Activated B cell treated with CpG ODN at 0.5 μM for 24 hours (primary cell): ENCODE measurements at regions of chr1 and their contacts with region 1.

Region 1: DNA sequence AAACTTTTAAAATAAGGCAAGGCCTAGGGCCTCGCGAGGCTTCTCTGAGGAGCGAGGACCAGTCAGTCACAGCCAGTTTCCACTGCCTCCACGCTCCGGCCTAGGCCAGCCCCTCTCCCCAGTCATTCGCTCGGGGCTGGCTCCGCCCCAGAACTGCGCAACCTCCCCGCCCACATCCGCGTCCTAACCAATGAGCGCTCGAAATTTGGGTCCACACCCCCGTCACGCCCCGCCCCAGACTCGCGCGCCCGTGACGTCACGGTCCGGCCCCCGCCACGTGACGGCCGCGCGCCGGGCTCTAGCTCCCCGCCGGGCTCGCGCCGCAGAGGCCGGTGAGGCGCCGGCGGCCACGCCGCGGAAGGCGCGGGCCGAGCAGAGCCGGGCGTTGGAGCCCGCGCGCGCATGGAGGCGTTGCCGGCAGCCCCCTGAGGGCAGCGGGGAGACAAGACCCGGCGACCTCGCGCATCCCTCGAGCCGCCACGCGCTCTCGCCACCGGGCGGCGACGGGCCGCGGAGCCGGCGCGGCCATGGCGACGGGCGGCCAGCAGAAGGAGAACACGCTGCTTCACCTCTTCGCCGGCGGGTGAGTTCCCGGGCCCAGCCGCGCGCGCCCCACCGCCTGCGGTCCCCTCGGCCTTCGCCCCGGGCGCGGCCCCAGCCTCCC is at the start of gene SLC25A33:
- DNase-seq: peak; percentile 99
- ATAC-seq: peak; percentile 96
- H3K4me3 Mint-ChIP-seq: peak within 1 kb of the TSS; percentile 92
- H3K27ac Mint-ChIP-seq: peak within 1 kb of the TSS; percentile 90
- H3K4me1 Mint-ChIP-seq: peaks cover 29% of the 10 kb centered on the region
- H3K27me3 Mint-ChIP-seq: no peaks in the 10 kb centered on the region
- CTCF ChIP-seq: no peak
- total RNA-seq, gene SLC25A33: 6.5 and 7.5 TPM in 2 replicates

Region 2: DNA sequence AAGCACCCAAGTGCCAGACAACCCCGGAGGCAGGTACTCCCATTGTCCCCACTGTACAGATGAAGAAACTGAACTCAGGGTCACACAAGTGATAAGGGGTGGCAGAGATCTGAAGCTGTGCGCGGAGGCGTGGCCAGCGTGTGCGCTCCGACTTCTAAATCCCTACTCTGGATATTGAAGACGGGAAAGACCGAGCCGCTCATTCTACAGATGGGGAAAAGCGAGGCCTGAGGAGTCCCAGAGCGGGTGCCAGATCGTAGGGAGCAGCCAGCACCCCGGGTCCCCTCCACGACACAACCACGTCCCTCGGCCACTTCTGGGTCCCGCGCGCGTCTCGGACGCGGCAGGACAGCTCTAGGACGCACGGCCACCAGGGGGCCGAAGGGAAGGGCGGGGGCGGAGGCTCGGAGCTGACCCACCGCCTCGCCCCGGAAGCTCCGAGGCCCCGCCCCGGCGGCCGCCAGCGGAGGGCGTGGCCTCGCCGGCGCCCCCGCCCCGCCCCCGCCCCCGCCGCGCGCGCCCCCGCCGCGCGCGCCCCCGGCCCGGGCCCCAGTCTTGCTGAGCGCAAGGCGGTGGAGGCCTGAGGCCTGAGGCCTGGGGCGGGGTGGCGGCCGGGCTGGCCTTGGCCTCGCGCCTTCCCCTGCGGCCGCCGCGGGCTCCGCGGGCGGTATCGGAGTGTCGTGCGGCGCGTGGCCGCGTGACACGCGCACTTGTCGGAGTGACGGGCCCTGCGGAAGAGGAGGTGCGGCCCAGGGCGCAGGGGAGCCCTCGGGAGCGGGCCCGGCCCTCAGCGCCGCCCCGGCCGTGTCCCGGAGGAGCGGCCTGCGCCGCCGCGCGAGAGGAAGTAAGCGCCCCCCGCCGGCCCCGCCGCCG is 304.8 kb before region 1 on chr1 and contains the start of gene H6PD:
- CTCF ChIA-PET with region 1: no interaction called
- POLR2A ChIA-PET with region 1: no interaction called
- intact Hi-C with region 1: loop called (anchors 1 kb)
- DNase-seq: peak; percentile 82
- ATAC-seq: peak; percentile 82
- H3K4me3 Mint-ChIP-seq: peak within 1 kb of the TSS; percentile 92
- H3K27ac Mint-ChIP-seq: peak within 1 kb of the TSS; percentile 94
- H3K4me1 Mint-ChIP-seq: peaks cover 34% of the 10 kb centered on the region
- H3K27me3 Mint-ChIP-seq: no peaks in the 10 kb centered on the region
- CTCF ChIP-seq: no peak
- total RNA-seq, gene H6PD: 20.3 and 21.9 TPM in 2 replicates

Region 3: GRCh38 chr1:9520411-9520810 is 18.9 kb before region 1 on chr1:
- CTCF ChIA-PET with region 1: no interaction called
- POLR2A ChIA-PET with region 1: interaction called, 13 read pairs
- intact Hi-C with region 1: no loop called
- DNase-seq: no peak
- ATAC-seq: no peak
- H3K4me3 Mint-ChIP-seq: no peak overlapping the region
- H3K27ac Mint-ChIP-seq: no peak overlapping the region
- H3K4me1 Mint-ChIP-seq: no peaks in the 10 kb centered on the region
- H3K27me3 Mint-ChIP-seq: peaks cover 2% of the 10 kb centered on the region
- CTCF ChIP-seq: no peak

Region 4: DNA sequence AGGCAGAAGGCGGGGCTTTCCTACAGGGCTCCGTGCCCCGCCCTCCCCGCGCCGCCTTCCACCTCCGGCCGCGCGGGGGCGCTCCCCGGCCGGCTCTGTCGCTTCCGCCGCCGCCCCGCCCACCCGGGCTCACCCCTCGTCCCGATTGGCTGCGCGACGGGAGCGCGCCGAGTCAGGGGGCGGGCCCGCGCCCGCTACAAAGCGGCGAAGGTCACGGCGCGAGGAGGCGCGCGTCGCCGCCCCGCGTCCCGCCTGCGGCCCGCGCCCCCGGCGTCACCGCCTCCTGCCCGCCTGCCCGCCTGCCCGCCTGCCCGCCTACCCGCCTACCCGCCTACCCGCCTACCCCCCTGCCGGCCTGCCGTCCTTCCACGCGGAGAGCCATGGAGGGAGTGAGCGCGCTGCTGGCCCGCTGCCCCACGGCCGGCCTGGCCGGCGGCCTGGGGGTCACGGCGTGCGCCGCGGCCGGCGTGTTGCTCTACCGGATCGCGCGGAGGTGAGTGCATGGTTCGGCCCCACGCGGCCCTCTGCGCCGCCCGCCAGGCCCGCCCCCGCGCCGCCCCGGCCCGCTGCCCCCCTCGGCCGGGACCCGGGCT is 49.4 kb after region 1 on chr1 and contains the start of gene TMEM201:
- CTCF ChIA-PET with region 1: no interaction called
- POLR2A ChIA-PET with region 1: interaction called, 3 read pairs
- intact Hi-C with region 1: loop called (anchors 5 kb)
- DNase-seq: peak; percentile 98
- ATAC-seq: peak; percentile 91
- H3K4me3 Mint-ChIP-seq: peak within 1 kb of the TSS; percentile 84
- H3K27ac Mint-ChIP-seq: peak within 1 kb of the TSS; percentile 12
- H3K4me1 Mint-ChIP-seq: peaks cover 38% of the 10 kb centered on the region
- H3K27me3 Mint-ChIP-seq: no peaks in the 10 kb centered on the region
- CTCF ChIP-seq: no peak
- total RNA-seq, gene TMEM201: 8.1 and 9.4 TPM in 2 replicates

Region 5: GRCh38 chr1:9753121-9753531 is 213.8 kb after region 1 on chr1:
- CTCF ChIA-PET with region 1: no interaction called
- POLR2A ChIA-PET with region 1: no interaction called
- intact Hi-C with region 1: no loop called
- DNase-seq: no peak
- ATAC-seq: no peak
- H3K4me3 Mint-ChIP-seq: no peak overlapping the region
- H3K27ac Mint-ChIP-seq: no peak overlapping the region
- H3K4me1 Mint-ChIP-seq: no peaks in the 10 kb centered on the region
- H3K27me3 Mint-ChIP-seq: no peaks in the 10 kb centered on the region
- CTCF ChIP-seq: no peak

Region 6: GRCh38 chr1:9910425-9911178 is 371.3 kb after region 1 on chr1:
- CTCF ChIA-PET with region 1: no interaction called
- POLR2A ChIA-PET with region 1: no interaction called
- intact Hi-C with region 1: loop called (anchors 2 kb)
- DNase-seq: no peak
- ATAC-seq: peak; percentile 90
- H3K4me3 Mint-ChIP-seq: peak overlapping the region; percentile 97
- H3K27ac Mint-ChIP-seq: peak overlapping the region; percentile 99
- H3K4me1 Mint-ChIP-seq: peaks cover 22% of the 10 kb centered on the region
- H3K27me3 Mint-ChIP-seq: no peaks in the 10 kb centered on the region
- CTCF ChIP-seq: no peak